ENCODE measurements at regions of chr11 and their contacts with region 1.

Region 1: GRCh38 chr11:105164208-105164607 is 24.6 kb upstream of the CARD18 start:
- DNase-seq: no peak
- H3K4me3 ChIP-seq: no peak overlapping the region
- H3K27ac ChIP-seq: no peak overlapping the region
- H3K4me1 ChIP-seq: peaks cover 13% of the 10 kb centered on the region
- H3K27me3 ChIP-seq: no peaks in the 10 kb centered on the region
- CTCF ChIP-seq: no peak
- POLR2A ChIP-seq: no peak

Region 2: DNA sequence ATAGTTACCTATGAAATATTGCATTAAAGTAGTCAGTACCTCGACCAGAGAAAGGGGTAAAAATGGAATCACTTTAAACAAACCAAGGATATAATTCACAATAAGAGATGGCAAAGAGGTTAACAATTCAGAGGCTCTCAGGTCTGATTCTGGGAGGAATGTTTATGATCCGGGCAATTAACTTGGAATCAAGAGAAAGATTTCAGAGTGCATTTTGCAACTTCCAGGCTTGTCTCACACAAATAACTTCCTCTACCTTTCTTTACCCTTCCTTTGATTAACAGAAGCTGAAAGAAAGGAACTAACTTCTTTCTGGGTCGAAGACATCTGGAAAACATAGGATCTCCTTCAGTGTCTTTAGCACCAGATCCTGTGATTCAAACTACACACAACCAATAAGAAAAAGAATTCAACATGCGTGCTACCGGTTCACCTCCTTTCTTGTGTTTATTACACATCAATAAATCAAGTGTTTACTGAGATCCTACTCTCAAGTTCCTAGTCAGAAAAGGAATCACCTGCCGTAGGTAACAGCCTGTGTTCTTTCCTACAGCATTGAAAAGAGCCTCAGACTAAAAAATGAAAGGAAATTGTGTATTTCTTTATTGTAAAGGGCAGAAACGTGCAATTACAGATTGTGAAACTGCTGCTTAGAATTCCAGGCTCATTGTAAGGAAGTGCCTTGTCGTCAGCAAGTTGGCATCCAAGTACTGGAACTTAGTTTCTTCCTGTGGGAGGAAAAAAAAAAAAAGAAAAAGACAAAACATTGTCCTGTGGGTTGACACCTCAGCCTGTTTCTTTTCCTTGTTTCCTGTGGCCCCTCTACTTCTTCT is 54.1 kb before region 1 on chr11:
- CTCF ChIA-PET with region 1: no interaction called
- POLR2A ChIA-PET with region 1: no interaction called
- dilution Hi-C with region 1: no loop called
- intact Hi-C with region 1: loop called (anchors 5 kb)
- DNase-seq: peak; percentile 72
- H3K4me3 ChIP-seq: peak overlapping the region in 1 of 3 experiments; percentile 33
- H3K27ac ChIP-seq: peak overlapping the region; percentile 81
- H3K4me1 ChIP-seq: peaks cover 17% of the 10 kb centered on the region
- H3K27me3 ChIP-seq: no peaks in the 10 kb centered on the region
- CTCF ChIP-seq: no peak
- POLR2A ChIP-seq: peak; percentile 9

Region 3: DNA sequence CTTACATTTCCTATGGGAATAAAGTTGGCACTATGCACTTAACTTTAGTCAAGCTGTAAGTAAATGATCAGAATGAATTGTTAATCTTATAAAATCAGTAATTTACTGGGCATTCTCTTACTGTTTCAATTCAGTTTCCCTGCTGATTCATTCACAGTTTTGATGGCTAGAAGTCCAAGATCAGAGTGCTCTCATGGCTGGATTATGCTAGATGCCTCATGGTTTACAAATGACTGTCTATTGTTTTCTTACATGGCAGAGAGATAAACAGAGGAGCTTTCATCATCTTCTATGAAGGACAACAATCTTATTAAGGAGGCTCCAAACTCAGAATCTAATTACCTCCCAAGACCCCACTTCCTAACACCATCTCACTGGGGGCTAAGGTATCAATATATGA is 110.4 kb after region 1 on chr11:
- CTCF ChIA-PET with region 1: no interaction called
- POLR2A ChIA-PET with region 1: no interaction called
- dilution Hi-C with region 1: no loop called
- intact Hi-C with region 1: no loop called
- DNase-seq: no peak
- H3K4me3 ChIP-seq: no peak overlapping the region
- H3K27ac ChIP-seq: no peak overlapping the region
- H3K4me1 ChIP-seq: no peaks in the 10 kb centered on the region
- H3K27me3 ChIP-seq: no peaks in the 10 kb centered on the region
- CTCF ChIP-seq: no peak
- POLR2A ChIP-seq: no peak